WTC11 (cell line): ENCODE measurements at regions of chr2 and their contacts with region 1.

Region 1: DNA sequence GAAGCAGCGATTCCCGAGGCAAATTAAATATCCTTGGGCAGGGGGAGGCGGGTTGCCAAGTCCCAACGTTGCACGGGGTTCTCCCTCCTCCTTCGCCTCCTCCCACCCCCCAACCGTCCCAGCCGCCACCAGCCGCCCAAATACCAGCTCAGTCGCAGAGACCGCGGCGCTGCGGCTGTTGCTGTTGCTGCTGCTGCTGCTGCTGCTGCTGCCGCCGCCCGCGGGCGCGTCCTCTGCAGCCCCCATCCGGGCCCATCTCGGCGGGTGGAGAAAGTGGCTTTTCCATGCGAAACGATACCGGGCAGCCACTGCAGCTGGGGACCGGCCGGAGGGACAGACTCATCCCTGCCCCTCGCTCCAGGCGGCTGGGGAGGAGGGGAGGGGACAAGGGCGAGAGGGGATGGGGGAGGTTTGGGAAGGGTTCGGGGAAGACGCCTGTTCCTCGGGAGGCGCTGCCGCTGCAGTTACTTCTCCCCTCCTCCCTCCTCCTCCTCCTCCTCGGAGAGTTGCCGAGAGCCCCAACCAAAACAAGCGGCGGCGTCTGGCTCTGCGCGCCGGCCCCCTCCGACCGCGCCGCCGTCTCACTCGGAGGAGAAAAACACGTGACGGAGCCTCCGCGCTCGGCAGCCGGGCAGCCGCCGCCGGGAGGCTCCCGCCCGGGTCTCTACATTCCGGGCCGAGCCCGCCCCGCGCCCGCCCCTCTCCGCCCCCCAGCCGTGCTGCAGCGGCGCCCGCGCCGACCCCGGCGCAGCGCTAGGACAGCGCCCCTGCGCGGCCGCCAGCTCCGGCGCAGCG is at the start of gene IRS1:
- DNase-seq: peak; percentile 72
- ATAC-seq: peak; percentile 17
- H3K4me3 Mint-ChIP-seq: peak within 1 kb of the TSS; percentile 85
- H3K27ac Mint-ChIP-seq: peak within 1 kb of the TSS; percentile 49; the same call in 1 of the 2 replicates
- H3K4me1 Mint-ChIP-seq: peaks cover 46% of the 10 kb centered on the region
- H3K27me3 Mint-ChIP-seq: no peaks in the 10 kb centered on the region
- CTCF ChIP-seq: no peak
- total RNA-seq, gene IRS1: 18.2 to 22.9 TPM (median 18.6 TPM) in 3 replicates

Region 2: GRCh38 chr2:226813148-226813701 is 13.8 kb after region 1 on chr2:
- CTCF ChIA-PET with region 1: interaction called, 12 read pairs
- POLR2A ChIA-PET with region 1: no interaction called
- DNase-seq: peak; percentile 26
- ATAC-seq: peak; percentile 94
- H3K4me3 Mint-ChIP-seq: no peak overlapping the region
- H3K27ac Mint-ChIP-seq: no peak overlapping the region
- H3K4me1 Mint-ChIP-seq: peaks cover 8% of the 10 kb centered on the region
- H3K27me3 Mint-ChIP-seq: no peaks in the 10 kb centered on the region; the same call in 1 of the 2 replicates
- CTCF ChIP-seq: no peak

Region 3: GRCh38 chr2:226835796-226836547 is 36.6 kb after region 1 on chr2 and contains the start of gene RHBDD1:
- CTCF ChIA-PET with region 1: interaction called, 9 read pairs
- POLR2A ChIA-PET with region 1: interaction called, 11 read pairs
- DNase-seq: peak; percentile 85
- ATAC-seq: peak; percentile 89
- H3K4me3 Mint-ChIP-seq: peak within 1 kb of the TSS; percentile 76
- H3K27ac Mint-ChIP-seq: peak within 1 kb of the TSS; percentile 89
- H3K4me1 Mint-ChIP-seq: peaks cover 13% of the 10 kb centered on the region
- H3K27me3 Mint-ChIP-seq: peaks cover 11% of the 10 kb centered on the region
- CTCF ChIP-seq: no peak
- total RNA-seq, gene RHBDD1: 20.5 to 26.8 TPM (median 25.7 TPM) in 3 replicates

Region 4: DNA sequence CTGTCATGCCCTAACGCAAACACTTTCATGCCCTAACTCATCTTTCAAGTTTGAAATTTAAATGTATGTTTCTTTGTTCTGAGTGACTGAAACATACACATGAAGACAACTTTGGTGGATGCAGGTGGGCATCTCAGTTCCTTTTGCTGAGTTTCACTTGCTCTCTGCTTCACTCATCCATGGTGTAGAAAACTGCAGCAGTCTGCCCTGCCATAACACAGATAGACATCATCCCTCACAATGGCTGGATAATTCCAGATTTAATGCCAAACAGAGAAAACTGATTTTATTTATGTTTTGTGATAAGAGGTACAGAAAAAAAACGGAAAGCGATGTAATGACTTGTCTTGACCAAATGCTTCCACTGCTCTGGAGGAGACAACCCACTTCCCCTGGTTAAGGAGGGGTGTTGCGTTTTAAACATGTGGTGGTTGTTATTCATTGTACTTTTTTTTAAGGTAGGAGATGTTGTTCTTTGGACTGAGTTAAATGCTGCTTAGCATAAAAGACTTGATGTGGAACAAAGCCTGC is 106.8 kb after region 1 on chr2:
- CTCF ChIA-PET with region 1: no interaction called
- POLR2A ChIA-PET with region 1: no interaction called
- DNase-seq: no peak
- ATAC-seq: no peak
- H3K4me3 Mint-ChIP-seq: no peak overlapping the region
- H3K27ac Mint-ChIP-seq: no peak overlapping the region
- H3K4me1 Mint-ChIP-seq: no peaks in the 10 kb centered on the region
- H3K27me3 Mint-ChIP-seq: no peaks in the 10 kb centered on the region
- CTCF ChIP-seq: no peak